ENCODE measurements at regions of chr4 and their contacts with region 1.

Region 1: DNA sequence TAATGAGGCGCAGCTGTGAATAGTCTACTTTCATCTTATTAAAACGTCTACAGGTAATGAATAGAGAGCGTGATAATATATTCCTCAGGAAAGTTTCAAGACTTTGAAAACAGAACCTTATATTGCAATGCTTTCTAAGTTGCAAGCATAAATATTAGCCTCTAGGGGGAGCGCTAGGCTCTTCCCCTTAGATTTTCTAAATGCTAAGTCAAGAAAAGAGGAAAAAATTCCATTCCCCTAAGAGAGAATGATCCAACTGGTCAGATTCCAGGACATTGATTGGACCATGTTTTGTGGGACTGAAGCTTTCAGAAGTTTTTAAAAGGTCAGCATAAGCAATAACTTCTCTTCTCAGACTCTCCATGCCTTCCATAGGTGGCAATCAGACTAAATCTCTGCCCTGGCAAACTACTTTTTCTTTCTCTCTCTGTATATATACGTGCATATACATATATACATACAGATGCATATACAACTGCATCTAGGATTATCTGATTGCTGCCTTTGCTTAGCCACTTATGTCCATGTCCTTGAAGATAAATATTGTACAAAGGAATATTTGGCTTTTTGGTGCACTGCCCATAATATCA is 492.9 kb downstream of the INPP4B start:
- DNase-seq: peak; percentile 68
- H3K4me3 Mint-ChIP-seq: no peak overlapping the region
- H3K27ac Mint-ChIP-seq: peak overlapping the region; percentile 85
- H3K4me1 Mint-ChIP-seq: peaks cover 37% of the 10 kb centered on the region
- H3K27me3 Mint-ChIP-seq: no peaks in the 10 kb centered on the region
- CTCF ChIP-seq: peak; percentile 83

Region 2: GRCh38 chr4:142126890-142127497 is 226.2 kb before region 1 on chr4:
- CTCF ChIA-PET with region 1: interaction called, 5 read pairs
- POLR2A ChIA-PET with region 1: no interaction called
- intact Hi-C with region 1: loop called (anchors 2 kb)
- DNase-seq: peak; percentile 66
- H3K4me3 Mint-ChIP-seq: no peak overlapping the region
- H3K27ac Mint-ChIP-seq: no peak overlapping the region
- H3K4me1 Mint-ChIP-seq: peaks cover 7% of the 10 kb centered on the region
- H3K27me3 Mint-ChIP-seq: no peaks in the 10 kb centered on the region
- CTCF ChIP-seq: peak; percentile 79

Region 3: GRCh38 chr4:142405021-142405694 is 51.9 kb after region 1 on chr4:
- CTCF ChIA-PET with region 1: interaction called, 18 read pairs
- POLR2A ChIA-PET with region 1: interaction called, 24 read pairs
- intact Hi-C with region 1: loop called (anchors 5 kb)
- DNase-seq: peak; percentile 86
- H3K4me3 Mint-ChIP-seq: peak overlapping the region; percentile 80
- H3K27ac Mint-ChIP-seq: peak overlapping the region; percentile 84
- H3K4me1 Mint-ChIP-seq: peaks cover 49% of the 10 kb centered on the region
- H3K27me3 Mint-ChIP-seq: no peaks in the 10 kb centered on the region
- CTCF ChIP-seq: no peak

Region 4: DNA sequence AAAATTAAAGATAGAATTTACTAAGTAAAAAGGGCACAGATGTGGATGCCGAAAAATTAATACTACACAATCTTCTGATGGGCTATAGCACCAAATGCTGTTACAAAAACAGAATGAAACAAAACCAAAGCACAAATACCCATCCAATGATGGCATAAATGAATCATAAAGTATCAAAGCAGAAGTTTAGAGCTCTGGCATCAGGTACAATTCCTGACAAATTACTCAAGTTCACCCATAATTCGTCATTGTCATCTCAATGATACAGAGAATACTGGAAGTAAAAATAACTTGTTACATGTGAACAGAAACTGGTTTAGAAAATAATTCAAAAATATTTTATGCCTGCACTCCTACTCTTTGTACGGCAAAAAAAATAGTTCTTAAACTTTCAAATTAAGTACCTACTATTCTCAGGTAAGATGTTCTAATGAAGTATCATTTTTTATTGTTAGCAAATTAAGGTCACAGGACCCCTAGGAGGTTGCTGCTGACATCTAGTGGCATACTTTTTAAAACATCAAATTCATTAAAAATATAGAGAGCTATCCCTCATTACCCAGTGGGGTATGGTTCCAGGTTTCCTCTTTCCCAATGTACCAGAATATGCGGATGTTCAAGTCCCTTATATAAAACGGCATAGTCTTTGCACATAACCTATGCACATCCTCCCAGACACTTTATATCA is 366.8 kb after region 1 on chr4:
- CTCF ChIA-PET with region 1: interaction called, 13 read pairs
- POLR2A ChIA-PET with region 1: interaction called, 4 read pairs
- intact Hi-C with region 1: loop called (anchors 1 kb)
- DNase-seq: peak; percentile 58
- H3K4me3 Mint-ChIP-seq: no peak overlapping the region
- H3K27ac Mint-ChIP-seq: no peak overlapping the region
- H3K4me1 Mint-ChIP-seq: peaks cover 17% of the 10 kb centered on the region
- H3K27me3 Mint-ChIP-seq: no peaks in the 10 kb centered on the region
- CTCF ChIP-seq: peak; percentile 50

Region 5: GRCh38 chr4:142840516-142841123 is 487.4 kb after region 1 on chr4:
- CTCF ChIA-PET with region 1: interaction called, 8 read pairs
- POLR2A ChIA-PET with region 1: no interaction called
- intact Hi-C with region 1: loop called (anchors 1 kb)
- DNase-seq: peak; percentile 51
- H3K4me3 Mint-ChIP-seq: no peak overlapping the region
- H3K27ac Mint-ChIP-seq: no peak overlapping the region
- H3K4me1 Mint-ChIP-seq: peaks cover 6% of the 10 kb centered on the region
- H3K27me3 Mint-ChIP-seq: no peaks in the 10 kb centered on the region
- CTCF ChIP-seq: peak; percentile 44

Region 6: DNA sequence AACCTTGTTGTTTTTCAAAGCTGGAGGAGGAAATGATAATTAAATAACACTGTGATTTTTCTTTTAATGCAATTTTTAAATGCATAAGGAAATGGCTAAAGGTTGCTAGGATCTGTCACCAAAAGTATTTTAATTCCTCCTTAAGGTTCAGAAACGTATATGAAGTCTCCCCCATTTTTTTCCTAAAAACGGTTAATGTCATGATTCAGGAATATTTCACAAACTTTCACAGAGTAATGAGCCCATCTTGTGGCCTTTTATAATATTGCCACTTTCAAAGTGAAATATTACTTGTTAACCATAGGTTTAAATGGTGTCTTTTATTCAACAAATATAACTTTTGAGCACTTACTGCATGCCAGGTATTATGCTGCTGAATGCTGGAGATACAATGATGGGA is 732.0 kb after region 1 on chr4:
- CTCF ChIA-PET with region 1: no interaction called
- POLR2A ChIA-PET with region 1: no interaction called
- intact Hi-C with region 1: loop called (anchors 10 kb)
- DNase-seq: peak; percentile 17
- H3K4me3 Mint-ChIP-seq: no peak overlapping the region
- H3K27ac Mint-ChIP-seq: no peak overlapping the region
- H3K4me1 Mint-ChIP-seq: peaks cover 14% of the 10 kb centered on the region
- H3K27me3 Mint-ChIP-seq: no peaks in the 10 kb centered on the region
- CTCF ChIP-seq: peak; percentile 31

Measured in MCF 10A (cell line).